ENCODE measurements at regions of chr4 and their contacts with region 1.

Region 1: GRCh38 chr4:108570993-108571569 is 49.3 kb upstream of the RPL34 start:
- DNase-seq: no peak
- H3K4me3 ChIP-seq: no peak overlapping the region
- H3K27ac ChIP-seq: no peak overlapping the region
- H3K4me1 ChIP-seq: no peaks in the 10 kb centered on the region
- H3K27me3 ChIP-seq: no peaks in the 10 kb centered on the region
- CTCF ChIP-seq: no peak

Region 2: GRCh38 chr4:108024085-108024877 is 546.8 kb before region 1 on chr4:
- intact Hi-C with region 1: loop called (anchors 5 kb)
- DNase-seq: no peak
- H3K4me3 ChIP-seq: no peak overlapping the region
- H3K27ac ChIP-seq: no peak overlapping the region
- H3K4me1 ChIP-seq: no peaks in the 10 kb centered on the region
- H3K27me3 ChIP-seq: no peaks in the 10 kb centered on the region
- CTCF ChIP-seq: no peak

Measured in colonic mucosa (tissue), 4 donors.